ENCODE measurements at regions of chr20 and their contacts with region 1.

Region 1: DNA sequence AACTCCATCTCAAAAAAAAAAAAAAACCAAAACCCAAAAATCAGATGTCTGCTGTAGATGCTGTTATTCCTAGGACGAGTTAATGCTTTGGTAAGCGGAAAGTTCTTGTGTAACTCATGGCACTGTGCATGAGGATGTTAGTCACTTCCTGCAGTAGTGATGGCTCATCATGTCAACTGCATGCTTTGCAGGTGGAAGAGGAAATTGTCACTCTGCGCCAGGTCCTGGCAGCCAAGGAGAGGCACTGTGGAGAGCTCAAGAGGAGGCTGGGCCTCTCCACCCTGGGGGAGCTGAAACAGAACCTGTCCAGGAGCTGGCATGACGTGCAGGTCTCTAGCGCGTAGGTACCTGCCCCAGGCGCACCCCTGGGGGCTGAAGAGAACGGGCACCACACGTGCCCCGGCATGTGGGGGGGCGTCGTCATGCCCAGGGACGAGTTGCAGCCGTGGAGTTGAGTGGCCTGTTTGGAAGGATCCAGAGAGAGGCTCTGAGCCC is 8.5 kb downstream of the TPD52L2 start:
- H3K4me3 Mint-ChIP-seq: peak overlapping the region; percentile 65
- H3K27ac Mint-ChIP-seq: peak overlapping the region; percentile 94
- H3K4me1 Mint-ChIP-seq: peaks cover 63% of the 10 kb centered on the region
- H3K27me3 Mint-ChIP-seq: no peaks in the 10 kb centered on the region

Region 2: DNA sequence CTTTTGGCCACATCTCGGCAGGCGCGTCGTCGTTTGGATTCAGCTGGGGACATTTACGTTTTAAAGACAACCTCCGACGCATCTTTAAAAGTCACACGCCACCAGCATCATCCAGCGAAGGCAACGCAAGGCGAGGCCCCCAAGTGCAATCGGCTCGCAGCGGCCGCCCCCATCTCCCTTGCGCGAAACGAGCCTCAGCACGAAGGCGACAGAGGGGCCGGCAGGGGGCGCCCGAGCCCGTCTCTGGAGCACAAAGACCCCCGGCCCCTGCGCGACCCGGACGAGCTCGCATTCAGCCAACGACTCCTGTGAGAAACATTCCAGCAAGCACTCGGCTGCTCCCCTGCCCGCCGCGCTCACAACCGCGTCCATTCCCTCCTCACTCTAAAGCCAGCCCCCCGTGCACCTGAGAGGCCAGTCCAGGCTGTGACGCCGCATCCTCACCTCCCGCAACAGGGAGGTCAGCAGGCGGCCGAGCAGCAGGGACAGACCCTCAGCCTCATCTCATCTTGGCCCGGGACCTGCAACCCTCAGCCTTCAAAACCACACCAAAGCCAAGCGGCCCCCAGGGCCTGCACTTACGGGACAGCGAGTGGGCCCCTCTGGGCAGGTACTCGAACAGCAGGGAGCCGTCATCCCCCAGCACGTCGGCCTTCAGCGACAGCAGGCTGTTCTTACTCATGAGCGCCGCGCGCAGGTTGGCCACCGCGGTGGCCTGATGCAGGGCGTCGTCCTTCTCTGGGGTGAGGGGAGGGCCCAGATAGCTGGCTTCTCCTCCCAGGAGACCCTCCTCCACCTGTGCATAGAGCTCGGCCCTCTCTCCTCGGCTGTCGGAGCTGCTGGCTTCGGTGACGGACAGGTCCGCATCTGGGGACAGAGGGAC is 98.2 kb before region 1 on chr20:
- intact Hi-C with region 1: no loop called
- H3K4me3 Mint-ChIP-seq: no peak overlapping the region
- H3K27ac Mint-ChIP-seq: no peak overlapping the region
- H3K4me1 Mint-ChIP-seq: peaks cover 16% of the 10 kb centered on the region
- H3K27me3 Mint-ChIP-seq: peaks cover 11% of the 10 kb centered on the region

Region 3: GRCh38 chr20:63858393-63859165 is 14.9 kb before region 1 on chr20:
- intact Hi-C with region 1: no loop called
- H3K4me3 Mint-ChIP-seq: peak overlapping the region; percentile 57
- H3K27ac Mint-ChIP-seq: peak overlapping the region; percentile 84
- H3K4me1 Mint-ChIP-seq: peaks cover 80% of the 10 kb centered on the region
- H3K27me3 Mint-ChIP-seq: peaks cover 11% of the 10 kb centered on the region

Region 4: DNA sequence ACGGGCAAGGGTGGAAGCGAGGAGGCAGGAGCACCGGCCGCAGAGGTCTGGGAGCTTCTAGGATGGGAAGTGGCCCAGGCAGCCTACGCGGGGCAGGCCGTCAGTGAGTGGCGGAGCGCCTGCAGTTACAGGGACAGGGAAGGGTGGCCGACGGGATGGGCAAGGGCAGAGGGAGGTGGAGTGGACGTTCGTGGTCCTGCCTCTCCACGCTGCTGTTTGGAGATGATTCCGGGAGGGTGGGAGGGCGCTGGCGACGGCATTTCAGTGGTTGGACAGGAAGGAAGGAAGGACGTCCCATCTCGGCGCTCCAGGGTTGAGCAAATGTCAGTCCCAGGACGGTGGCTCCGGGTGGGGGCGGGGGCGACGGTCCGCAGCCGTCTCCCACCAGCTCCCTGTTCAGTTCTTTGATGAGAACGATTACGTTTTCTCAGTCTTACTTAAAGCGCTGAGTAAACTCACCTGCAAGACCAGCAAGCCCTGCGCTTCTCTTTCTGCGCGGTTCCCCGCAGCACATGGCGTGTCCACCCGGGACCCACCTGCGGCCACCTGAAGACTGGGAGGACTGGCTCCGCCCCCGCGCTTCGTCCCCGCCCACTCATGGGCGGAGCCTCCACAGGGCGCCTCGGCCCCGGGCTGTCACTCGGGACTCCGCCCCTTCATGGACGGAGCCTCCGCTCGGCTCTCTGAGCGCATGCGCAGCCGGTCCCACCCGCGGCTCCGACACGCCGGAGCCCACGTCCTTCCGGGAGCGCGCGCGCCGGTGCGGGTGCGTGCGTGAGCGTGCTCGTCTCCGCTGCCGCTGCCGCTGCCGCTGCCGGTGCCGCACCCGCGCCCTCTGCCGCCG is 21.1 kb after region 1 on chr20 and contains the start of gene DNAJC5:
- intact Hi-C with region 1: loop called (anchors 2 kb)
- H3K4me3 Mint-ChIP-seq: peak within 1 kb of the TSS; percentile 79
- H3K27ac Mint-ChIP-seq: peak within 1 kb of the TSS; percentile 93
- H3K4me1 Mint-ChIP-seq: peaks cover 58% of the 10 kb centered on the region
- H3K27me3 Mint-ChIP-seq: no peaks in the 10 kb centered on the region

Region 5: DNA sequence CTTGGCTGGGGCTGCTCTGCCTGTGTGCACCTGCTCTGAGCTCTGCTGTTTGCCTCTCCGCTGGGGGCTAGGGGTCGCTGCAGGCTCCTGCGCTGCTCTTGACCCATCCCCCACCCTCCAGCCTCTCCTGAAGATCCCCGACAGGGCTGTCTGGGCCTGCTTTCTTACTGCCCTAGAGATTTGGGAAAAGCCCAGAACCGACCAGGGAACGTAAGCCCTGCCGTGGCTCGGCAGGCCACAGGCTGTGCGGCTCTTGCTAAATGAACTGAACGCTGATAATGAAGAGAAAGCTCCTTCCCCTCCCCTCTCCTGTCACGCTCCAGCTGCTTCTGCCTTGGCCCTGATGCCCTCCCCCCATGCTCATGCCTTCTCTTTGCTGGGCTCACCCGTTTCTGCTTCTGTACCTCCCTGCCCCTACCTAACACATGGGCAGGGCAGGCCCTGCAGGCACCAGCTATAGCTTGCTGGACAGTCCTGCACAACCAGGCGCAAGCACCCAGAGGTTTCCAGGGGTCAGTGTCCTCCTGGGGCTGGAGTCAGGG is 350.1 kb after region 1 on chr20:
- intact Hi-C with region 1: no loop called
- H3K4me3 Mint-ChIP-seq: no peak overlapping the region
- H3K27ac Mint-ChIP-seq: no peak overlapping the region
- H3K4me1 Mint-ChIP-seq: no peaks in the 10 kb centered on the region
- H3K27me3 Mint-ChIP-seq: no peaks in the 10 kb centered on the region

Measured in dendritic cell treated with granulocyte-macrophage colony-stimulating factor and Interleukin-4, amounts not matched to agents 40 ng/mL and 50 ng/mL, for 4 days (primary cell).